ENCODE measurements at regions of chr20 and their contacts with region 1.

Region 1: DNA sequence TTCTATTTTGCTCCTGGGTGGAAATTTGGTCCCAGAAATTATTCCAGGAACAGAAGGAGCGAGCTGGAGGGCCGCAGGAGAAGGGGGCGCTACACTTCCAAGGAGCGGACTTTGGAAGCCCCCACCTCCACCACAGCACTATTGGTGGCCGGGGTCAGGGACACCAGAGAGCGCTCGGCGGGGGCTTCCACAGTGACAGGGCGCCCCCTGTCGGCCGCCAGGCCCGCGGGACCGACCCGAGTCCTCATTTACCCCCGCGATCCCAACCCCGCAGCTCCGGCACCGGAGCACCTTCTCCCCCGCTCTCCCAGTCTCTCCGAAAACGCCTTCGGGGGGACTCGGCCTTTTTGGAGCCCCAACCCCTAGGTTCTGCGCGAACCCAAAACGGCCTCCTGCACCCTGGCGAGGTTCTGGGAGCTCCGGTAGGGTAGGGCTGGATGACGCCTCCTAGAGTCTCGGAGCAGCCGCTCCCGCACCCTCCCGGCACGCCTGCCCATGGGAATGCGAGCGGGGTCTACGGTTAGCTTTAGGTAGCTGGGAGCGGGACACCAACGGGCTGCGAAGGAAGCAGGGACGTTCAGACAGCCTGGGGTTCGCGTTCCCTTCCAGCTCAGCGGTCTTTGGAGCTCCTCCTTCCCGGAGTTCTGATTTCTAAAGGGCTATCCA is 2.4 kb upstream of the FOXA2 start:
- DNase-seq: peak in 5 of 10 donors; percentile 4 to 84 (median 33)

Region 2: DNA sequence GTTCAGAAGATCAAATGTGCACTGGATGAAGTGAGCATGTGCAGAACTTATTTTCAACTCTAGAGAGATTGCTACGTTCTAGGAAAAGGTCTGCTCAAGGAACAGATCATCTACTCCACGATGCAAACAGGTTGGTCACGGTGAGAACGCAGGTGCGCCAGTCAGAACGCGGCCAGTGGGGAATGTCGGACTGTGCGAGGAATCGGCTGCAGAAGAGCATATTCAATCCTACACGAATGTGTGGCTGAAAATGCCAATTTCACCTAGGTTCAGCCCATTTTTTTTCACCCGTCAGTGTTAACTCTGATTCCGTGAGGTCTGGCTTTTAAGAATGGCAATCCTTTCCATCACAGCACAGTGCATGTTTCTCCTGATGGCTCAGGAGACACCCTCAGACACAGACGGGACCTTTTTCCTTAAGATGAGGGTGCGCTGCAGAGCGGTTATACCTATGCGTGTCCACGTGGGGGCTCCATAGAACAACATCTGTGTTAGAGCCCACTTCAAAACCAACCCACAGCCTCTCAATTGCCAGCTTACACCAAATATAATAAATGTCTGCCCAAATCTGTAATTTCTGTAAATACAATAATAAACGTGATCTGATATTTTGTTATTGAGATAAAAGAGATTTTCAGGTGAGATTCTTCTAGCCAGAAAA is 252.8 kb before region 1 on chr20:
- intact Hi-C with region 1: loop called (anchors 10 kb)
- DNase-seq: peak in 7 of 10 donors; percentile 27 to 76 (median 39)